Naive thymus-derived CD4-positive, alpha-beta T cell (primary cell): ENCODE measurements at regions of chr14 and their contacts with region 1.

Region 1: GRCh38 chr14:75427482-75428229 is at the start of gene JDP2:
- DNase-seq: peak; percentile 19 to 57 (median 43)
- ATAC-seq: peak; percentile 80
- H3K4me3 ChIP-seq: peak within 1 kb of the TSS; percentile 41
- H3K4me3 Mint-ChIP-seq: peak within 1 kb of the TSS; percentile 55 to 92 (median 76)
- H3K27ac ChIP-seq: no peak within 1 kb of the TSS
- H3K27ac Mint-ChIP-seq: peak within 1 kb of the TSS in 1 of 9 donors; percentile 70
- H3K4me1 ChIP-seq: no peaks in the 10 kb centered on the region
- H3K4me1 Mint-ChIP-seq: peaks cover 0 to 17% (median 8%) of the 10 kb centered on the region in 7 donors
- H3K27me3 ChIP-seq: no peaks in the 10 kb centered on the region
- H3K27me3 Mint-ChIP-seq: peaks cover 5 to 37% (median 20%) of the 10 kb centered on the region in 5 donors
- total RNA-seq, gene JDP2: 0.86 to 29.0 (median 1.5) TPM

Region 2: GRCh38 chr14:75333606-75334548 is 93.8 kb before region 1 on chr14:
- CTCF ChIA-PET with region 1: no interaction called
- POLR2A ChIA-PET with region 1: no interaction called
- intact Hi-C with region 1: loop called in 1 of 2 experiments (anchors 10 kb)
- DNase-seq: peak; percentile 36 to 80 (median 72)
- ATAC-seq: peak; percentile 94
- H3K4me3 ChIP-seq: peak overlapping the region; percentile 71
- H3K4me3 Mint-ChIP-seq: peak overlapping the region; percentile 84 to 93 (median 88)
- H3K27ac ChIP-seq: peak overlapping the region; percentile 77
- H3K27ac Mint-ChIP-seq: peak overlapping the region; percentile 90 to 99 (median 98)
- H3K4me1 ChIP-seq: peaks cover 12 to 14% of the 10 kb centered on the region in 2 donors
- H3K4me1 Mint-ChIP-seq: peaks cover 20 to 42% (median 28%) of the 10 kb centered on the region in 7 donors
- H3K27me3 ChIP-seq: no peaks in the 10 kb centered on the region
- H3K27me3 Mint-ChIP-seq: peaks cover 0 to 18% (median 0%) of the 10 kb centered on the region in 5 donors